Heart right ventricle (tissue), 16 donors: ENCODE measurements at regions of chr19 and their contacts with region 1.

Region 1: DNA sequence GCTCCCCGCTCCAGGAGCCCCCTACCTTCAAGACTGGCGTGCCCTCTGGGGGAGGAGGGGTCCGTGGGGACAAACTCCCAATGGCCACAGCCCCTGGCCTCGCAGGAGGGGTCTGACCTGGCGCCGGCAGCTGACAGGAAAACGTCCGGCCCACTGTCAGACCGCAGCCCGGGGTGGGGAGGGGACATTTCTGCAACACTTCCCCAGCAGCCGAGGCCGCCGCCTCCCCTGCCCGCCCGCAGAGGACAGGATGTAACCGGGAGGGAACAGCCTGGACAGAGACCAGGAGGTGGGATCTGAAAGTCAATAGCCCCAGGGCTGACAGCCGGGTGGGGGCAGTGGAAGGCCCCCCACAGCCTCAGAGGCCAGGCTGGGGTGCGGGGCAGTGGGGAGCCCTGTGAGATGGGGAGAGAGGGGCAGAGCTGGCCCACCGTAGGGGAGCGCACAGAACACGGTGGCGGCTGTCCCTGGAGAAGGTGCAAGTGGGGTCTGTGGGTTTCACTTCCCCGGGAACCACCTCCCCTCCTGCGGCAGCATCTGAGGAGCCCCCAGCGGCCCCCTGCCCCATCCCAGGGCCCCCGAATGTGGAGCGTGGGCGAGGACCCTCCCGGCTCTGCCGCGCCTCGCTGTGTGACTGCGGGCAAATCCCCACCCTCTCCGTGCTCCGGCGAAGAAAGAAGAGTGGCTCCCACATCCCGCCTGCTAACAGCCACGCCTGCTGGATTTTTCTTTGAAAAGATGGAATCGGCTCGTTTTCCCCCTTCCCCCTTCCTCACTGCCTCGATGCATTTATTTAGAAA is at the start of gene PEAK3:
- DNase-seq: peak; percentile 81
- ATAC-seq: peak; percentile 78 to 96 (median 92)
- H3K4me3 ChIP-seq: peak within 1 kb of the TSS; percentile 1 to 53 (median 48)
- H3K27ac ChIP-seq: peak within 1 kb of the TSS in 8 of 10 donors; percentile 11 to 87 (median 55)
- H3K4me1 ChIP-seq: peaks cover 2 to 16% (median 13%) of the 10 kb centered on the region in 9 donors
- H3K27me3 ChIP-seq: peaks cover 0 to 21% (median 0%) of the 10 kb centered on the region in 7 donors
- CTCF ChIP-seq: no peak
- total RNA-seq, gene PEAK3: 0.11 to 1.1 (median 0.22) TPM

Region 2: DNA sequence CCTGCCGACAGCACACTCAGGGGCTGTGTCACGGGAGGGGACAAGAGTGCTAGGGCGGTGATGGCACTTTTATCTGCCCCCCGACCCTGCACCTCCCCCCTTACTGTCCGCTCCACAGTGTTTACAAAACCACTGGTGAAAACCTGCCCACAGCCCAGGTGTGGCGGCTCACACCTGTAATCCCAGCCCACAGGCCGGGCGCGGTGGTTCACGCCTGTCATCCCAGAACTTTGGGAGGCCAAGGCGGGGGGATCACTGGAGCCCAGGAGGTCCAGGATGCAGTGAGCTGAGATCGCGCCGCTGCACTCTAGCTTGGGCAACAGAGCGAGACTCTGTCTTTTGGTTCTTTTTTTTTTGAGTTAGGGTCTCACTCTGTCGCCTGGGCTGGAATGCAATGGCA is 13.9 kb after region 1 on chr19:
- intact Hi-C with region 1: no loop called
- DNase-seq: no peak
- ATAC-seq: no peak
- H3K4me3 ChIP-seq: no peak overlapping the region
- H3K27ac ChIP-seq: no peak overlapping the region
- H3K4me1 ChIP-seq: peaks cover 6 to 31% (median 18%) of the 10 kb centered on the region in 9 donors
- H3K27me3 ChIP-seq: peaks cover 6 to 48% (median 42%) of the 10 kb centered on the region in 7 donors
- CTCF ChIP-seq: no peak

Region 3: DNA sequence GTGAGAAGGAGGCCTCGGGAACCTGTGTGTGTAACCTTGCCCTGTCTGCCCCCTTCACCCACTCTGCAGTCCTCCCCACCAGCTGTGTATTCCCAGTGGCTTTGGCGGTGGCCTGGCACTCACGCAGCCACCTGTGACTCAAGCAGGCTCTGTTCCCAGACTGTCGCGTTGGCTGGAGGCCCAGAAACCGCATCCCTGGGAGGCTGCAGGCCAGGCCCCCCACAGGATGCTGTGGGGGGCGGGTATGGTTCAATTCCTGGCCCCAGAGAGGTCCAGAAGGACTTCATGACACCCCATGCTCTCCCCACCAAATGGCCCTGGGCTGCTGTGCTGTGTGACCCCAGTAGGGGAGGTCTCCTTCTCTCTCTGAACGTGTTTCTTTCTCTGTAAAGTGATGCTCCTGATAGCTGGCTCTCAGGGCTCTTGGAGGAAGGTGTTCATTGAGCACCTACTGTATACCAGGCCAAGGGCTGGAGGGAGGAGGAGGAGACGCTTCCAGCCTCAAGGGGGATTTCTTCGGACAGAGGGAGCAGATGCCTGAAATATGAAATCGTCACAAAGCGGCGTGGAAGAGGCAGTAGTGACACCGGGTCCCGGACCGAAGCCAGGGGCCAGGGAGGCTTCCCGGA is 27.6 kb after region 1 on chr19:
- intact Hi-C with region 1: loop called in 6 of 10 experiments (anchors 2 to 5 kb)
- DNase-seq: no peak
- ATAC-seq: peak in 5 of 8 donors; percentile 46 to 61 (median 49)
- H3K4me3 ChIP-seq: no peak overlapping the region
- H3K27ac ChIP-seq: no peak overlapping the region
- H3K4me1 ChIP-seq: peaks cover 0 to 8% (median 0%) of the 10 kb centered on the region in 9 donors
- H3K27me3 ChIP-seq: peaks cover 0 to 85% (median 71%) of the 10 kb centered on the region in 7 donors
- CTCF ChIP-seq: no peak

Region 4: DNA sequence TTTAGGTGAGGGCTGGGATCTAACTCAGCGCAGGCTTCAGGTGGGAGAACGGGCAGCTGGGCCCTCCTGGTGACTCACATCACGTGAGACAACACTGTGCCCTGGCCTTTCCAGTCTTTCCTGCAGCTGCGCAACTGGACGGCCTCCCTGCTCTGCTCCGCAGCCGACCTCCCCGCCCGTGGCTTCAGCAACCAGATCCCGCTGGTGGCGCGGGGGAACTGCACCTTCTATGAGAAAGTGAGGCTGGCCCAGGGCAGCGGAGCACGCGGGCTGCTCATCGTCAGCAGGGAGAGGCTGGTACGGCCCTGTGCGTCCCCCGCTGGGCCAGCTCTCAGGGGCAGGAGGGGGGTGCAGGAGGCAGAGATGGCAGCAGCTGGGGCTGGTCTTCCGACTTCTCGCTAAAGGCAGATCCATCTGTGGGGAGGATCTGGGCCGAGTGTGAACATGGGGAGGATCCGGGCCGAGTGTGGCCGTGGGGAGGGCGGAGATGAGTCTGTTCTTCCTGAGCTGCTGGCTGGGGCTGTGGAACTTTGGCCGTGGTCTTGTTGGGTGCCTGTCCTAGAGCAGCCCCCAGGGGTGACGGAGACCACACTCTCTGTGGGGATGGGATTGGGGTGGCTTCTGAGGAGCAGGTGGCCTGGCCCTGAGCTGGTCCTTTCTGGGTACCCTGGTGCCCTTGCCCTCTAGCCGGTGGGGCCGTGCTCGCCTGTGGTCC is 55.2 kb after region 1 on chr19:
- intact Hi-C with region 1: no loop called
- DNase-seq: peak in 1 of 2 donors; percentile 5
- ATAC-seq: peak in 2 of 8 donors; percentile 27 to 32
- H3K4me3 ChIP-seq: no peak overlapping the region
- H3K27ac ChIP-seq: no peak overlapping the region
- H3K4me1 ChIP-seq: peaks cover 1 to 12% (median 3%) of the 10 kb centered on the region in 9 donors
- H3K27me3 ChIP-seq: no peaks in the 10 kb centered on the region
- CTCF ChIP-seq: no peak

Region 5: GRCh38 chr19:2385053-2385721 is 102.9 kb after region 1 on chr19:
- intact Hi-C with region 1: loop called in 4 of 10 experiments (anchors 5 to 10 kb)
- DNase-seq: no peak
- ATAC-seq: no peak
- H3K4me3 ChIP-seq: peak overlapping the region in 1 of 10 donors; percentile 22
- H3K27ac ChIP-seq: no peak overlapping the region
- H3K4me1 ChIP-seq: peaks cover 0 to 8% (median 3%) of the 10 kb centered on the region in 9 donors
- H3K27me3 ChIP-seq: peaks cover 0 to 33% (median 14%) of the 10 kb centered on the region in 7 donors
- CTCF ChIP-seq: no peak

Region 6: DNA sequence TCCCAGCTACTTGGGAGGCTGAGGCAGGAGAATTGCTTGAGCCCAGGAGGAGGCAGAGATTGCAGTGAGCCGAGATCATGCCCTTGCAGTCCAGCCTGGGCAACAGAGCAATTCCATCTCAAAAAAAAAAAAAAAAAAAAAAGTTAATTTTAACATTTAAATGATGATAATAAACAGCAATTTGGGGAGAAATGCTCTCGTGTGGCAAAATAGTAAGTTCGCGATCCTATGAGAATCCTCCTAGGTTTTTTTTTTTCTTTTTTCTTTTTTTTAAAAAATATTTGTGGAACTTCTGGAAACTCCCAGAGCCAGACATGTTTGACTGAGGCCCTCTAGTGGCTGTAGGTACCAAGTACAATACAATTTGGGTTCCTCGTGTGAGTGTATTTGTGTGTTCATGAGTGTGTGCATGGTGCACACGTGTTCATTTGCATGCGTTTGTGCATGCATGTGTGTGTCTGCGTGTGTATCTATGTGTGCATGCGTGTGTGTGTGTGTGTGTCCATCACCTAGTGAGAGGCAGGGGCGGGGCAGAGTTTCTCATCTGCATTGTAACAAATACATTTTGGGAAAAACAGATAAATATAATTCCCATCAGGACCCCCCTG is 109.0 kb after region 1 on chr19:
- intact Hi-C with region 1: loop called in 4 of 10 experiments (anchors 5 to 10 kb)
- DNase-seq: peak in 1 of 2 donors; percentile 35
- ATAC-seq: peak in 5 of 8 donors; percentile 33 to 71 (median 43)
- H3K4me3 ChIP-seq: no peak overlapping the region
- H3K27ac ChIP-seq: no peak overlapping the region
- H3K4me1 ChIP-seq: peaks cover 0 to 5% (median 0%) of the 10 kb centered on the region in 9 donors
- H3K27me3 ChIP-seq: peaks cover 0 to 31% (median 6%) of the 10 kb centered on the region in 7 donors
- CTCF ChIP-seq: peak; percentile 62 to 82 (median 74)